ENCODE measurements at regions of chr20 and their contacts with region 1.

Region 1: GRCh38 chr20:2172305-2173175 is 70.9 kb downstream of the STK35 start:
- DNase-seq: peak; percentile 59 to 88
- ATAC-seq: peak; percentile 86 to 89
- H3K4me3 ChIP-seq: no peak overlapping the region; the same call in 2 of the 3 replicates
- H3K27ac ChIP-seq: no peak overlapping the region
- H3K4me1 ChIP-seq: no peaks in the 10 kb centered on the region
- CTCF ChIP-seq: peak; percentile 97
- EP300 ChIP-seq: no peak
- POLR2A ChIP-seq: no peak
- RAD21 ChIP-seq: peak; percentile 97

Region 2: DNA sequence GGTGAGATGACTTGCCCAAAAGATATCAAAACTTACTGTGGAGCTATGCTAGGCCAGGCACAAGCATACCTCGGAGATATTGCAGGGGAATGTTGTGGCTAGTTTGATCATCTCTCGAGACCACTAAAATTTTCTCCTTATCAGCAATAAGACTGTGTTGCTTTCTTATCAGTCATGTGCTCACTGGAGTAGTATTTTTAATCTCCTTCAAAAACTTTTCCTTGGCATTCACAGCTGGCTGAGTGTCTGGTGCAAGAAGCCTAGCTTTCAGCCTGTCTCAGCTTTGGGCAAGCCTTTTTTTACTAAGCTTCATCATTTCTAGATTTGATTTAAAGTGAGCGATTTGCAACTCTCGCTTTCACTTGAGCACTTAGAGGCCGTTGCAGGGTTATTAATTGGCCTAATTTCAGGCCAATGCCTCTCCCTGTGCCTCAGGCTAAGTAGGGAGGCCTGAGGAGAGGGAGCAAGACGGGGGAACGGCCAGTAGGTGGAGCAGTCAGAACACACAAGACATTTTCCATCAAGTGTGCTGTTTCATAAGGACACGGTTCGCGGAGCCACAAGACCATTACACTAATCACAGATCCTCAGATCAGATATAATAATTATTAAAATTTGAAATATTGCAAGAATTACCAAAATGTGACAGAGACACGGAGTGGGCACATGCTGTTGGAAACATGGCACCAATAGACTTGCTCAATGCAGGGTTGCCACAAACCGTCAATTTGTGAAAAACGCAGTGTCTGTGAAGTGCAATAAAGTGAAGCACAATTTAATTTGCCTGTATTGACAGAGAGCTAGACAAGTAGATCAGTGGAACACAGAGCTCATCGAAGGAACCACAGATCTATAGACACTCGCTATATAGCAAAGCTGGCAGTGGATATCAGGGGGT is 408.2 kb before region 1 on chr20:
- CTCF ChIA-PET with region 1: interaction called, 64 read pairs
- POLR2A ChIA-PET with region 1: no interaction called
- DNase-seq: peak; percentile 80 to 85
- ATAC-seq: peak; percentile 95 to 98
- H3K4me3 ChIP-seq: no peak overlapping the region
- H3K27ac ChIP-seq: no peak overlapping the region
- H3K4me1 ChIP-seq: peaks cover 11% of the 10 kb centered on the region
- CTCF ChIP-seq: peak; percentile 88
- EP300 ChIP-seq: no peak
- POLR2A ChIP-seq: no peak
- RAD21 ChIP-seq: peak; percentile 87 to 91

Region 3: DNA sequence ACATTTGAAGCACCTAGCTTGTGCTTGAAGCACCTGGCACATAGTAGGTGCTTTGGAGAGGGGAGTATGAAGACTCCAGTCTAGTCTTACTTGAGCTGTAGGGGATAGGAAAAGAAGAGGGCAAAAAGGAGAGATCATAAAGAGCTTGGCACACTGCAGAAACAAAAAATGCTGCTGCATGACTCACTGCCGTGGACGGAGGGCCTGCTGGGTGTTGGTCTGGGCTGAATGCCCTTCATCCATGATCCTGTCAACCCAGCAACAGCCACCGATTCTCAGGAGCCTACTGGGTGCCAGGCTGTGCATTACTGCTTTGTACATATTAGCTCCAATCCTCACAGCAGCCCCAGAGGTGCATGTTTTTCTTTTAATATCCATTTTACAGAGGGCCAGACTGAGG is 184.7 kb before region 1 on chr20:
- CTCF ChIA-PET with region 1: interaction called, 34 read pairs
- POLR2A ChIA-PET with region 1: no interaction called
- DNase-seq: no peak
- ATAC-seq: peak in 1 of 2 experiments; percentile 51; a peak in 2 of 6 replicates
- H3K4me3 ChIP-seq: no peak overlapping the region
- H3K27ac ChIP-seq: no peak overlapping the region
- H3K4me1 ChIP-seq: no peaks in the 10 kb centered on the region
- CTCF ChIP-seq: no peak
- EP300 ChIP-seq: no peak
- POLR2A ChIP-seq: no peak
- RAD21 ChIP-seq: no peak

Region 4: GRCh38 chr20:2093159-2093781 is 79.3 kb before region 1 on chr20:
- CTCF ChIA-PET with region 1: interaction called, 10 read pairs
- POLR2A ChIA-PET with region 1: no interaction called
- DNase-seq: peak; percentile 59 to 60
- ATAC-seq: peak; percentile 66 to 85; a peak in 4 of 6 replicates
- H3K4me3 ChIP-seq: no peak overlapping the region
- H3K27ac ChIP-seq: no peak overlapping the region
- H3K4me1 ChIP-seq: no peaks in the 10 kb centered on the region
- CTCF ChIP-seq: peak; percentile 68
- EP300 ChIP-seq: no peak
- POLR2A ChIP-seq: no peak
- RAD21 ChIP-seq: peak; percentile 66 to 80

Region 5: DNA sequence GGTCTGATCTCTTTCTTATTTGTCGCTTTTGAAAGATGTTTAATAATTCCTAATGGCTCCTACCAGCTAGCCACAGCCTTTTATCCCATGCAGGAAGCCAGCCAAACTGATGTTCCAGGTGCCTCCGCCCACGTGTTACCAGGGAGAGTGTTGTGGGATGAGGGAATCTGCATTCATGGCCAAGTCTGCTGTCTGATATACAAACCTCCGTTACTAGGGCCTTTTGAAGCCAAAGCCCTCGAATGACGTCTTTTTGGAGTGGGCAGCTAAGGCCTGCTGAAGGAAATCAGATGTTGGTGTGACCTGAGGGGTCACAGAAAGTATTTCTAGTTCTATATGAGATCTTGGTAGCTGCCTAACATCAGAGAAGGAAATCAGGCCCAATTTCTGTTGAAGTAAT is 49.6 kb before region 1 on chr20:
- CTCF ChIA-PET with region 1: interaction called, 14 read pairs
- POLR2A ChIA-PET with region 1: no interaction called
- DNase-seq: no peak
- ATAC-seq: no peak
- H3K4me3 ChIP-seq: no peak overlapping the region
- H3K27ac ChIP-seq: no peak overlapping the region
- H3K4me1 ChIP-seq: no peaks in the 10 kb centered on the region
- CTCF ChIP-seq: no peak
- EP300 ChIP-seq: no peak
- POLR2A ChIP-seq: no peak
- RAD21 ChIP-seq: no peak

Region 6: GRCh38 chr20:2156666-2157624 is 15.6 kb before region 1 on chr20:
- CTCF ChIA-PET with region 1: interaction called, 76 read pairs
- POLR2A ChIA-PET with region 1: no interaction called
- DNase-seq: no peak
- ATAC-seq: no peak
- H3K4me3 ChIP-seq: no peak overlapping the region
- H3K27ac ChIP-seq: no peak overlapping the region
- H3K4me1 ChIP-seq: no peaks in the 10 kb centered on the region; the same call in 2 of the 3 replicates
- CTCF ChIP-seq: no peak
- EP300 ChIP-seq: no peak
- POLR2A ChIP-seq: no peak
- RAD21 ChIP-seq: no peak

Region 7: GRCh38 chr20:2261105-2261504 is 88.6 kb after region 1 on chr20:
- CTCF ChIA-PET with region 1: no interaction called
- POLR2A ChIA-PET with region 1: no interaction called
- DNase-seq: peak; percentile 34 to 83
- ATAC-seq: peak; percentile 64 to 89; a peak in 5 of 6 replicates
- H3K4me3 ChIP-seq: no peak overlapping the region
- H3K27ac ChIP-seq: no peak overlapping the region; a peak in 1 of 6 replicates
- H3K4me1 ChIP-seq: peaks cover 10% of the 10 kb centered on the region
- CTCF ChIP-seq: no peak
- EP300 ChIP-seq: no peak
- POLR2A ChIP-seq: no peak
- RAD21 ChIP-seq: no peak

Region 8: DNA sequence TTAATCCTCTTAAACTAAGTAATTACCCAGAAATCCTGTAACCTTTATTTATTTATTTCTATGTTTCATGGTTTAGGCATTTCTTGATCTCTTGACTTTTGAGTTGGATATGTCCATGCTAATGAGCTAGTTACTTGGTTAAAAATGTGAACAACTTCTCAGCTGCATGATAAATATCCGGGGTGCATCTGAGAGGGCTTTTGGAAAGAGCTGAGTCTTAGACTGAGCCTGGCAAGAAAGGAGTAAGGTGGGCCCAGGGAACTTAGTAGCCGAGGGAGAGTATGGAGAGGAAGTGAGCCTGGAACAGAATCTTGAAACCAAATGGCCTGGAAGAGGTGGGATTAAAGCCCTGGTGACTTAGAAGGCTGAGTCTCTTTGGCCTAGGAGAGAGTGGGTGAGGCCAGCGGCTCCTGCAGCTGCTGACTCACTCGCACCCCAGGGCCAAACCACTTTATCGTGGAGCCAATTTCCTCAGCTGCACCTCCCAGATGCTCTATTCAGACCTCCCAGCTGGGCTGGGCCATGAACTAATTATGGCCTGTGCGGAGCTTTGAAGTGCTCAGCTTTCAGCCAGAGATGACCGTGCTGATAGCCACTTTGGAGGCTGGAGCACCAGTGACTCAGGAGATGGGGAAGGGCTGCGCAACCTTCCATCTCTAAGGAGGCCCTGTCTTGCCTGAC is 142.4 kb after region 1 on chr20:
- CTCF ChIA-PET with region 1: no interaction called
- POLR2A ChIA-PET with region 1: no interaction called
- DNase-seq: peak in 1 of 2 experiments; percentile 35
- ATAC-seq: peak in 1 of 2 experiments; percentile 55; a peak in 3 of 6 replicates
- H3K4me3 ChIP-seq: no peak overlapping the region
- H3K27ac ChIP-seq: peak overlapping the region; percentile 41 to 53
- H3K4me1 ChIP-seq: peaks cover 10% of the 10 kb centered on the region; the same call in 2 of the 3 replicates
- CTCF ChIP-seq: no peak
- EP300 ChIP-seq: no peak
- POLR2A ChIP-seq: no peak
- RAD21 ChIP-seq: no peak

Region 9: DNA sequence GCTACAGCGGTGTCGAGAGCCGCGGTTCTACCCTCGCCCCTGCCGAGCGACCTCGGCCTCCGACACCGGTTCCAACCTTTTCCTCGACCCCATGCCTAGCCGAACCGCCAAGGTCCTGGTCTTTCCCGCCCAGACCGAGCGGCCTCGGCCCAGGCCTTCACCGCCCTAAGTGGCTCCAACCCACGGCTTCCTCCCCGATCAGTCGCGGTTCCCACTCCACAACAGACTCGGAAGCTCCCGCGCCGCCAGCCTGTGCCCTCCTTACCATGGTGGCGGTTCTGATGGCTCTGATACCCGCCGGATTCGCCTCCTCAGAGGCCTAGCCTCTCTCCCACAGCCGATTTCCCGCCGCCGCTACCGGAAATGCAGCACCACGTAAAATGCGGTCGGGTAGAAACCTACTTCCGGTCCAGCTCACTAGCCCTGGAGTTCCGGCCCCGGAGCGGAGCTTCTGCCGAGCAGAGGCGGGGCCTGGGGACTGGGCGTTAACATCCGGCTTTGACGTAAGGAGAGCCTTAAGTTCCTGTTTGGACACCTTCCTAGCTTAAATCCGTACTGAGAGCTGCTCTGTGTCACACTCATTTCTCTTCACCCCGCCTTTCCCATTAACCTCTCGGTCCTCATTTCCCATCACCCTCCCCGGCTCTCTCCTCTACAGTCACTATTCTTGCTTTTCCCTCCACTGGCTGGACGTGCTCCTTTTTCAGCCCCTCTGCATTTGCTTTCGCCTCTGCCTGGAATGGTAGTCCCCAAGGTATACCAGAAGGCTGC is 298.1 kb after region 1 on chr20 and contains the start of gene SNRPB:
- CTCF ChIA-PET with region 1: no interaction called
- POLR2A ChIA-PET with region 1: no interaction called
- DNase-seq: peak; percentile 99 to 100
- ATAC-seq: peak; percentile 97 to 98
- H3K4me3 ChIP-seq: peak within 1 kb of the TSS; percentile 67
- H3K27ac ChIP-seq: peak within 1 kb of the TSS; percentile 92 to 93
- H3K4me1 ChIP-seq: peaks cover 25% of the 10 kb centered on the region
- CTCF ChIP-seq: no peak
- EP300 ChIP-seq: no peak
- POLR2A ChIP-seq: peak; percentile 91
- RAD21 ChIP-seq: no peak
- polyA plus RNA-seq, gene SNRPB: 486 and 557 TPM in 2 replicates